Endothelial cell of umbilical vein (primary cell): ENCODE measurements at regions of chr20 and their contacts with region 1.

Region 1: DNA sequence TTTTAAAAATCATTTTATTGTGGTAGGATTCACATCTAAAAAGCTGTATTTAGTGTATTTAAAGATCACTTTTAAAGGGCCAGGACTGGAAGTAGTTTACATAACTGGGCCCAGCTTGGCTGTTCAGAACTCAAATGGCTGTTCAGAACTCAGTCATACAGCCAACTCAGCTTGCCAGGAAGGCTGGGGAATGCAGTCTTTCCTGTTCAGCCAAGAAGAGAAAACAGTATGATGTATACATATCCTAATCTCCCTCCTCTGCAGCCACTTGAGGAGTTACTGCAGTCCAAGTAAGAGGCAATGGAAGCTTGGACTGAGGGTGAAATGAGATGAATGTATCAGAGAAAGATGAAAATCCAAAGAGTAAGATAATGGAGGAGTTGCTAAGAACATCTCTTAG is 24.6 kb downstream of the DSTN start:
- DNase-seq: peak; percentile 89
- H3K4me3 ChIP-seq: no peak overlapping the region
- H3K27ac ChIP-seq: peak overlapping the region; percentile 9
- H3K4me1 ChIP-seq: peaks cover 21% of the 10 kb centered on the region
- H3K27me3 ChIP-seq: no peaks in the 10 kb centered on the region
- CTCF ChIP-seq: no peak
- POLR2A ChIP-seq: no peak

Region 2: GRCh38 chr20:17298171-17298570 is 296.3 kb before region 1 on chr20:
- CTCF ChIA-PET with region 1: no interaction called
- POLR2A ChIA-PET with region 1: no interaction called
- dilution Hi-C with region 1: no loop called
- intact Hi-C with region 1: no loop called
- DNase-seq: no peak
- H3K4me3 ChIP-seq: no peak overlapping the region
- H3K27ac ChIP-seq: no peak overlapping the region
- H3K4me1 ChIP-seq: no peaks in the 10 kb centered on the region
- H3K27me3 ChIP-seq: no peaks in the 10 kb centered on the region
- CTCF ChIP-seq: no peak
- POLR2A ChIP-seq: no peak

Region 3: DNA sequence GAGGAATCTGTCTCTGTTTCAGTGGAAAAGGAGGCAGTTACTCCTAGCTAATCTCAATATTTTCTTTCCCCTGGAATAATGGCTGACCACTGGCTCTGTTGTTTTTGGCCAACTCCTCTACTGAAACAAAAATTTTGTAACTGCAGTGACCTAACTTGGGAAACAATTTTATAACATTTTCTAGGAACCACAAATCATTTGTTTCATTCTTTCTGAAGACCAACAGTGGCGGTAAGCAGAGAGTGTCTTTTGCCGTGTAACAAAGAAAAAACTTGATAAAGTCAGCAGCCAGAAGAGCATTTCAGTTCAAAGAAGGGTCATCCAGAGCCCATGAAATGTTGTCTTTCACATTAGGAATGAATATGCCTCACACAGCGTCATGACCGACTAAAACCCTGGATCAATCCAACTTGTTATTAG is 51.4 kb before region 1 on chr20:
- CTCF ChIA-PET with region 1: interaction called, 7 read pairs
- POLR2A ChIA-PET with region 1: no interaction called
- dilution Hi-C with region 1: loop called (anchors 5 kb)
- intact Hi-C with region 1: no loop called
- DNase-seq: peak; percentile 67
- H3K4me3 ChIP-seq: no peak overlapping the region
- H3K27ac ChIP-seq: no peak overlapping the region
- H3K4me1 ChIP-seq: no peaks in the 10 kb centered on the region
- H3K27me3 ChIP-seq: no peaks in the 10 kb centered on the region
- CTCF ChIP-seq: no peak
- POLR2A ChIP-seq: no peak

Region 4: GRCh38 chr20:17611540-17612286 is 17.3 kb after region 1 on chr20:
- CTCF ChIA-PET with region 1: interaction called, 10 read pairs
- POLR2A ChIA-PET with region 1: interaction called, 3 read pairs
- dilution Hi-C with region 1: no loop called
- intact Hi-C with region 1: no loop called
- DNase-seq: no peak
- H3K4me3 ChIP-seq: no peak overlapping the region
- H3K27ac ChIP-seq: peak overlapping the region; percentile 15
- H3K4me1 ChIP-seq: no peaks in the 10 kb centered on the region
- H3K27me3 ChIP-seq: no peaks in the 10 kb centered on the region
- CTCF ChIP-seq: peak; percentile 28 to 49
- POLR2A ChIP-seq: no peak

Region 5: GRCh38 chr20:17662333-17663039 is 68.0 kb after region 1 on chr20:
- CTCF ChIA-PET with region 1: no interaction called
- POLR2A ChIA-PET with region 1: no interaction called
- dilution Hi-C with region 1: no loop called
- intact Hi-C with region 1: no loop called
- DNase-seq: no peak
- H3K4me3 ChIP-seq: no peak overlapping the region
- H3K27ac ChIP-seq: no peak overlapping the region
- H3K4me1 ChIP-seq: peaks cover 26% of the 10 kb centered on the region
- H3K27me3 ChIP-seq: no peaks in the 10 kb centered on the region
- CTCF ChIP-seq: no peak
- POLR2A ChIP-seq: no peak